Colonic mucosa (tissue), 4 donors: ENCODE measurements at regions of chr2 and their contacts with region 1.

Region 1: GRCh38 chr2:239257511-239257937 is 143.3 kb downstream of the HDAC4 start:
- DNase-seq: no peak
- H3K4me3 ChIP-seq: no peak overlapping the region
- H3K27ac ChIP-seq: no peak overlapping the region
- H3K4me1 ChIP-seq: no peaks in the 10 kb centered on the region
- H3K27me3 ChIP-seq: no peaks in the 10 kb centered on the region
- CTCF ChIP-seq: no peak

Region 2: GRCh38 chr2:239882331-239882732 is 624.8 kb after region 1 on chr2:
- intact Hi-C with region 1: loop called (anchors 10 kb)
- DNase-seq: peak; percentile 65
- H3K4me3 ChIP-seq: no peak overlapping the region
- H3K27ac ChIP-seq: no peak overlapping the region
- H3K4me1 ChIP-seq: no peaks in the 10 kb centered on the region
- H3K27me3 ChIP-seq: no peaks in the 10 kb centered on the region
- CTCF ChIP-seq: peak; percentile 66